ENCODE measurements at regions of chr11 and their contacts with region 1.

Region 1: DNA sequence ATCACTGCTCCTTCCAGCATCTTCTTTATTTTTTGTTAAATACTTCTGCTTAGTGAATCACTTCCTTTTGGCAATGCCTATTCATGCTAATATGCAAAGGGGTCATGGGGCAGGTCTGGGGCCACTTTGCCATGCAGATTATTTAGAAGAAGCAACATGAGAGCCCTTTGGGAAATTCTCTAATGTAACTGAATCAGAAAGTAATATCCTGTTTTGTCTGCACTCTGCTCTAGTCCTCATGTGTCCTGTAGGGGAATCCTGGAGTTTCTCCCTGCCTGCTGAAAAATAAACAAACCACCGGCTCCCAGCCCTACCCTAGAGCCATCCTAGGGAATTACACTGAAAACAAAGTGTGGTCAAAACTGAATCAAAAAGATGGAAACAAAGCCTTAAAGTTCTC is 176.5 kb upstream of the POU2AF2 start:
- DNase-seq: no peak
- ATAC-seq: no peak
- H3K4me3 ChIP-seq: no peak overlapping the region
- H3K27ac ChIP-seq: no peak overlapping the region
- H3K4me1 ChIP-seq: no peaks in the 10 kb centered on the region
- H3K27me3 ChIP-seq: no peaks in the 10 kb centered on the region
- CTCF ChIP-seq: no peak

Region 2: DNA sequence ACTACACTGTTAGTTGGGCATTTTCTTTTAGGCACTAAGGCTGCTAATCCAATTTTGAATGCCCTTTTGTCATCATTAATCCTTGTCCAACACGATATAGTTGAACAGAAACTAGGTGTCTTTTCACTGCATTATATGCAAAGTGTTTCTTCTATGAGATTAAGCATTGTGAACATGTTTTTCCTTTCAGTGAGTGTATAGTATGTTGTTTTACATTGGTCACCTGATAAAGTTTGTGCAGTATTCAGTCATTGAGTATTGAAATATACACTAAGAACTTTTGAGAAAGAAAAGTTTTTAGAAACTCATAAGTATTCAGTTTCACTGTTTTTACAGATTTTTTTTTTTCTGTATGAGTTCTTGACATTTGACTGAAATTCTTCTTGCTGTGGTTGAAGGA is 916.9 kb before region 1 on chr11:
- intact Hi-C with region 1: loop called in 1 of 10 experiments (anchors 5 kb)
- DNase-seq: no peak
- ATAC-seq: no peak
- H3K4me3 ChIP-seq: no peak overlapping the region
- H3K27ac ChIP-seq: no peak overlapping the region
- H3K4me1 ChIP-seq: peaks cover 0 to 25% (median 19%) of the 10 kb centered on the region in 9 donors
- H3K27me3 ChIP-seq: no peaks in the 10 kb centered on the region
- CTCF ChIP-seq: no peak

Region 3: DNA sequence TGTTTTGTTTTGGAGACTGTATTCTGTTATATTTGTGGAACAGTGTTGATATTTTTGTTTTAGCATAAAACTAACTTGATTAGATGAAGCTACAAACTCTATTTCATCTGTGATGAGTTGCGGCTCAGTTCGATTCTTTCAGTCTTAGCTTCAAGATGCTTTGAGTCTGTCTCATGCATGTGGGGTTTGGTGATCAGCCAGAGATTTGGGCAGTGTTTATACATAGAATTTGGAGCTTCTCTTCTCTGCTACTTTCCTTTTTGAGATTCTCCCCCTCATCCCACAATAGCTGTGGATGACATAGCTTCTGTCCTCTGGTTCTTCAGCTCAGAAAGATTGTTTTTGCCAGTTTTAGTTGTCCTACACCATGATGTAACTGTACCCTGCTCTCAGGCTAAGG is 447.2 kb before region 1 on chr11:
- intact Hi-C with region 1: no loop called
- DNase-seq: no peak
- ATAC-seq: no peak
- H3K4me3 ChIP-seq: no peak overlapping the region
- H3K27ac ChIP-seq: no peak overlapping the region
- H3K4me1 ChIP-seq: no peaks in the 10 kb centered on the region
- H3K27me3 ChIP-seq: no peaks in the 10 kb centered on the region
- CTCF ChIP-seq: no peak

Region 4: DNA sequence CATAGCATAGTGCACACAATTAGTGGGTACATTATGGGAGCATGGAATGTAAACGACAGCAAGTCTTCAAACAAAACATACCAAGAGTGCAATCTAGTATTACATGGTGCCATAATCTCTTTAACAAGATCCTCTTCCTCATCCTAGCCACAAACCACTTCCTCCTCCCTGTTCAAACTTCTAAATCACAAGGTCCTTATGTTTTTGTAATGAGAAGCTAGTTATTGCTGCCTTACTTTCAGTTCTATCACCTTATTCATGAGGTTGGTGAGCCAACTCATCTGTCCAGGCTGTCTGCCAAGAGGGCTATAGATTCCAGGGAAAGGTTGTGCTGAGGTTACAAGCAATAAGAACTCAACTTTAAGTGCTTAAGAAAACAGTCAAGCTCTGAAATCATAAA is 161.4 kb before region 1 on chr11:
- intact Hi-C with region 1: no loop called
- DNase-seq: no peak
- ATAC-seq: no peak
- H3K4me3 ChIP-seq: no peak overlapping the region
- H3K27ac ChIP-seq: no peak overlapping the region
- H3K4me1 ChIP-seq: peaks cover 0 to 17% (median 0%) of the 10 kb centered on the region in 9 donors
- H3K27me3 ChIP-seq: peaks cover 0 to 6% (median 0%) of the 10 kb centered on the region in 7 donors
- CTCF ChIP-seq: no peak

Region 5: GRCh38 chr11:111019871-111020670 is 49.0 kb before region 1 on chr11:
- intact Hi-C with region 1: no loop called
- DNase-seq: no peak
- ATAC-seq: peak in 3 of 8 donors; percentile 29 to 81 (median 55)
- H3K4me3 ChIP-seq: no peak overlapping the region
- H3K27ac ChIP-seq: peak overlapping the region in 3 of 10 donors; percentile 1 to 79 (median 8)
- H3K4me1 ChIP-seq: peaks cover 0 to 34% (median 0%) of the 10 kb centered on the region in 9 donors
- H3K27me3 ChIP-seq: peaks cover 0 to 3% (median 0%) of the 10 kb centered on the region in 7 donors
- CTCF ChIP-seq: no peak